Calu3 (cell line): ENCODE measurements at regions of chr10 and their contacts with region 1.

Region 1: DNA sequence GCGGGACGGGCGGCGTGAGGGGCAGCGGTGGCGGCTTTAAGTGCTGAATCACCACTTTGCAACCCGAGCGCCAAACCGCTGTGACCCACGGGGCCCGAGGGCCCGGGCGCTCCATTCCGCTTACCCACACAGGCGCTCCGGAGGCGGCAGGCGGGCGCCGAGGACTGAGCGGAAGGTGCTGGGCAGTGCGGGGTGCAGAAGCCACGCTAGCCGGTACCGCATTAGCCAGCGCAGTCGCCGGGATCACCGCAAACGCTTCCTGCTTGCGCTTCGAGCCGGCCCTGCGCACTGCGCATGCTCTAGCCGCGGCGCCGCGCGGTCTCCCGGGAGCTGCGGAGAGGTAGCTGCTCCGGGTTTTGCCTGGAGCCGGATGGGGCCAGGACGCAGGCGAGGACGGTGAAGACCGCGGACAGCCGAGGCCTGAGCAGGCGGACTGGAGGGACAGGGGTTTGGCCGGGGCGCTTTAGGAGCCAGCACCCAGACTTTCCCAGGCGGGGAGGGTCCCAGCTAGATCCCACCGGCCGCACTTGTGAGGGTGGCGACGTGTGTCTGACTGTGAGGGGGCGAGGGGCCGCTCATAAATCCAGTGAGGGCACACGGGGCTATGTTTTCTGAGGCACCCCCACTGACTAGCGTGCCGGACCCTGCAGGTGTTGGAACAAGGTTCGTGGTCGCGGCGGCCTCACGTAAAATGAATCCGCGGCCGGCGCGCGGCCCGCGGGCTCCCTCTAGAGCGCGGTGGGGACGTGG is at the start of gene IDE:
- DNase-seq: peak; percentile 81
- H3K4me3 Mint-ChIP-seq: peak within 1 kb of the TSS; percentile 76
- H3K27ac Mint-ChIP-seq: peak within 1 kb of the TSS; percentile 30
- H3K4me1 Mint-ChIP-seq: peaks cover 25% of the 10 kb centered on the region
- H3K27me3 Mint-ChIP-seq: no peaks in the 10 kb centered on the region
- CTCF ChIP-seq: peak; percentile 34
- total RNA-seq, gene IDE: 30.6 and 31.7 TPM in 2 replicates

Region 2: DNA sequence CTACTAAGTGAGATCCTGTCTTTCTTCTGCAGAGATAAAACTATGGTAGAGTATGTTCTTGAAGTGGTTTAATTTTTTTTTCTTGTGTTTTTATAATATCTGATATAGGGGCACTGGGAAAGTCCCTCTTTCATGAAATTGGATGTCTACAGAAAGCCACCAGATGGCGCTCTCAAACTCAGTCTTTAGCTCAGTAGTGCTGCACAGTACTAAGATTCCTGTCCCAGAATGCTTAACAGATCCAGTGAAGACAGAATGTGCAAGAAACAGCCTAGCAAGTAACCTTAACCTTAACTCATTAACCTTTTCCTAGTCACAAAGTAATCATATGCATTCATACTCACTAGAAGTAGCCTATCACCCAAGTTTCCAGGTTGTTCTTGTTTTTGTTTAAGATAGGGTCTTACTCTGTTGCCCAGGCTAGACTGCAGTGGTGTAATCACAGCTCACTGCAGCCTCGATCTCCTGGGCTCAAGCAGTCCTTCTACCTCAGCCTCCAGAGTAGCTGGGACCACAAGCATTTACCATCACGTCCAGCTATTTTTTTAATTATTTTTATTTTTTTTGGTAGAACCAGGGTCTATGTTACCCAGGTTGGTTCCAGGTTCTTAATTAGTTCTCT is 56.8 kb before region 1 on chr10:
- CTCF ChIA-PET with region 1: interaction called, 11 read pairs
- intact Hi-C with region 1: loop called (anchors 1 kb)
- DNase-seq: peak; percentile 46
- H3K4me3 Mint-ChIP-seq: no peak overlapping the region
- H3K27ac Mint-ChIP-seq: no peak overlapping the region
- H3K4me1 Mint-ChIP-seq: no peaks in the 10 kb centered on the region
- H3K27me3 Mint-ChIP-seq: no peaks in the 10 kb centered on the region
- CTCF ChIP-seq: peak; percentile 31

Region 3: GRCh38 chr10:92591550-92592022 is 17.6 kb after region 1 on chr10:
- CTCF ChIA-PET with region 1: interaction called, 13 read pairs
- intact Hi-C with region 1: no loop called
- DNase-seq: peak; percentile 88
- H3K4me3 Mint-ChIP-seq: peak overlapping the region; percentile 97
- H3K27ac Mint-ChIP-seq: peak overlapping the region; percentile 100
- H3K4me1 Mint-ChIP-seq: peaks cover 27% of the 10 kb centered on the region
- H3K27me3 Mint-ChIP-seq: no peaks in the 10 kb centered on the region
- CTCF ChIP-seq: no peak